ENCODE measurements at regions of chr5 and their contacts with region 1.

Region 1: GRCh38 chr5:170216266-170216864 is 16.4 kb upstream of the C5orf58 start:
- DNase-seq: peak; percentile 73
- H3K4me3 ChIP-seq: no peak overlapping the region
- H3K27ac ChIP-seq: no peak overlapping the region
- H3K4me1 ChIP-seq: peaks cover 30% of the 10 kb centered on the region
- H3K27me3 ChIP-seq: no peaks in the 10 kb centered on the region
- CTCF ChIP-seq: peak; percentile 66 to 69
- POLR2A ChIP-seq: no peak

Region 2: DNA sequence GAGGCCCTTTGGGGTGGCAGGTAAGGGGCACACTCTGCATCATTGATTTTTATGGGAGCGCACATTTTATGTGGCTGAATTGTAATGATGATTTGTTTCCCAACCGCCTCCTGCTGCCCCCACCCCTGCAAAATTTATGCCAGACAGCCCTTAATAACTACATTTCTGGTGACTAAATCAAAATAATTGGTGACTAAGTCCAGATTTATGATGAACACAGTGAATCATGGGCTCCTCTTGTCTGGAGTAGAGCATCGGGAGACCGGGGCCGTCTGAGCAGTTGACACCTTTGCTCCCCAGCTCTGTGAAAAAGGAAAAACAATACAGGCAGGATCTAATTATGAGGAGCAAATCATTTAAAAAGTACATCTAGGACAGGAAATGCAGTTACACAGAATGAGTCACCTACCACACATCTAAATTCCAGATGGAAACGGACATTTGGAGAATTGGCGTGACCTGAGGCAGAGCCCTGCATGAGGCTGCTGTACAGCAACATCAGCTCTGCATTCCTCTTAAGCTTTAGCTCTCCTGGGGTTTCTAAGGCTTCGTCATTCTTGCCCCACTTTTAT is 520.4 kb before region 1 on chr5:
- CTCF ChIA-PET with region 1: interaction called, 29 read pairs
- POLR2A ChIA-PET with region 1: no interaction called
- dilution Hi-C with region 1: no loop called
- intact Hi-C with region 1: loop called (anchors 2 kb)
- DNase-seq: peak; percentile 96
- H3K4me3 ChIP-seq: no peak overlapping the region
- H3K27ac ChIP-seq: peak overlapping the region; percentile 98
- H3K4me1 ChIP-seq: peaks cover 30% of the 10 kb centered on the region
- H3K27me3 ChIP-seq: no peaks in the 10 kb centered on the region
- CTCF ChIP-seq: no peak
- POLR2A ChIP-seq: peak; percentile 74

Region 3: DNA sequence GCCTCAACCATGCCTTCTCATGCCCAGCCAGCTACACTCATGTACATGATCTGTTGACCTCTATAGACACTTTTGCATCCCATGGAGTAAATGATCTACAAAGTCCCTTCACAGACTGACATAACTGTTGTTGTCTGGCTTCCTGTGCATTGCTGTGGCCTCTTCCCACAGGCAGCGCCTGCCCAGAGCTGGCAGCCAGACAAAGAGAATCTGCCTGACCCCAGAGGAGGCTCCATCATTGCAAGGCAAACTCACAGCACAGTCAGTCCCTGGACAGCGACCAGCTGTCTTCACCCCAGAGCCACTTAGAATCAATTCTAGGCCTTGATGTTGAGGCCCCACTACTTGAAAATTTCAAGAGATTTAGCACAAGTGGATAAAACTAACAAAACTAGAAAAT is 301.6 kb before region 1 on chr5:
- CTCF ChIA-PET with region 1: no interaction called
- POLR2A ChIA-PET with region 1: no interaction called
- dilution Hi-C with region 1: no loop called
- intact Hi-C with region 1: loop called (anchors 5 kb)
- DNase-seq: peak; percentile 10
- H3K4me3 ChIP-seq: no peak overlapping the region
- H3K27ac ChIP-seq: no peak overlapping the region
- H3K4me1 ChIP-seq: no peaks in the 10 kb centered on the region
- H3K27me3 ChIP-seq: no peaks in the 10 kb centered on the region
- CTCF ChIP-seq: no peak
- POLR2A ChIP-seq: no peak

Region 4: GRCh38 chr5:170080217-170080616 is 136.1 kb before region 1 on chr5:
- CTCF ChIA-PET with region 1: interaction called, 15 read pairs
- POLR2A ChIA-PET with region 1: no interaction called
- dilution Hi-C with region 1: no loop called
- intact Hi-C with region 1: no loop called
- DNase-seq: no peak
- H3K4me3 ChIP-seq: no peak overlapping the region
- H3K27ac ChIP-seq: no peak overlapping the region
- H3K4me1 ChIP-seq: no peaks in the 10 kb centered on the region
- H3K27me3 ChIP-seq: peaks cover 0 to 4% of the 10 kb centered on the region in 2 experiments
- CTCF ChIP-seq: no peak
- POLR2A ChIP-seq: no peak

Region 5: DNA sequence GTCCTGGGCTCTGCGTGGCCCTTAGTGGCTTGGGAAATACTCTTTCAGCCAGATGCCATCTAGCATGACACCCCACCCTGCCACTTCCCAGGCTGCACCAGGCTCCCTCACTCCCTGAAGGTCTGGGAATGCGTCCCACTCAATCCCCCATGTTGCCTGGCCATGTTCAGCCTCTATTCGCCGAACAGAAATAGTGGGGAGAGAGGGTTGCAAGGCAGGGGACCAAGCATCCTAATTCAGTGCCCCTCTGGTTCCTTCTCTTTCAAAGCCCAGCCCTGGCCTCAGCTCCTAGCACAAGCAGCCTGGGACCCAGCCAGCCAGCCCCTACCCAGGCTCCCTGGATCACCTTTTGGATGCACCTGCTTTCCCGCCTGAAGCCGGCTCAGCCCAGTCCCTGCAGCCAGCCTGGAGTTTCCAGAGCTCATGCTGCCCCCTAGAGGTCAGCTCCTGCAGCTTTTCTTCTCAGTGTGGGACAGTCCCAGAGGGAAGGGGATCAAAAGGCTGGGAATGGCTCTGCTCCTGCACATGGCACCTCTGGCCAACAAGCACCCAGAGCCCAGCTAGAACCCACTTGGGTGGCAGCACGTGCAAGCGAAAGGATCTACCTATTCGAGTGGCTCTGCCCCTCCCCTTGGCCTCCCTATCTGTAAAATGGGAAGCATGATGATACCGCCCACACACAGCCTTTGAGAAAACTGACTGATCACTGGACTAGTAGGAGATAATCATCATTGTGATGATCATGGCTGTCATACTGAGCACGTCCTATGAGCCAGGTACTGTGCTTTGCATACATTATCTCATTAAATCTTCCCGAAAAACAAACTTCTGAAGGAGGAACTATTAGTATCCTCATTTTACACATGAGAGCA is 32.3 kb before region 1 on chr5:
- CTCF ChIA-PET with region 1: interaction called, 37 read pairs
- POLR2A ChIA-PET with region 1: no interaction called
- dilution Hi-C with region 1: no loop called
- intact Hi-C with region 1: loop called (anchors 1 kb)
- DNase-seq: peak; percentile 65
- H3K4me3 ChIP-seq: no peak overlapping the region
- H3K27ac ChIP-seq: no peak overlapping the region
- H3K4me1 ChIP-seq: no peaks in the 10 kb centered on the region
- H3K27me3 ChIP-seq: no peaks in the 10 kb centered on the region
- CTCF ChIP-seq: peak; percentile 84 to 94
- POLR2A ChIP-seq: no peak

Measured in endothelial cell of umbilical vein (primary cell).